ENCODE measurements at regions of chr20 and their contacts with region 1.

Region 1: DNA sequence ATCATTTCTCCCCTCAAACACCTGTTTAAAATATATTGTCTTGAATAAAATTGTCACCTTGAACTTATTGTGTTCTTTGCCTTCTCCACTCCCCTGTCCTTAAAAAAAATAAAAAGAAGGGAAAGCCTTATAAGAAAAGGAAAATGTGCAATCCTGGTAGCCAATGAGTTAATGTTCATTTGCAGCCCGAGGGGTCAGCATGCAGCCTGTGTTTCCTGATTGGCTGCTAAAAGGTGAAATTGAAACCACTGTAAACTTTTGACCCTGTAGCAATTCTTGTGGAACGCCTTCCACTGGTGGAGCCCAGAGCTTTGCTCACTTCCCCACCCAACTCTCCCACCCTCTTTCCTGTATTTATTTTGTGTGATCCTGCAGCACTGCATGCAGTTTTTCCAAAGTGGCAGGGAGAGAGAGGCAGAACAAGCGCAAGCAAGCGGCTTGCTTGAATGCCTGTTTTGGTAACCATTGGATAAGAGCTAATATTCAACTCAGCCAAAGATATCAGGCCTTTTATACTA is 74.9 kb downstream of the NCOA3 start:
- DNase-seq: peak; percentile 55 to 96
- H3K4me3 ChIP-seq: peak overlapping the region; percentile 2 to 24 (median 14)
- H3K27ac ChIP-seq: peak overlapping the region; percentile 52 to 78 (median 70)
- H3K4me1 ChIP-seq: peaks cover 47 to 85% (median 69%) of the 10 kb centered on the region in 4 donors
- H3K27me3 ChIP-seq: no peaks in the 10 kb centered on the region
- CTCF ChIP-seq: no peak
- EP300 ChIP-seq: no peak
- POLR2A ChIP-seq: no peak

Region 2: DNA sequence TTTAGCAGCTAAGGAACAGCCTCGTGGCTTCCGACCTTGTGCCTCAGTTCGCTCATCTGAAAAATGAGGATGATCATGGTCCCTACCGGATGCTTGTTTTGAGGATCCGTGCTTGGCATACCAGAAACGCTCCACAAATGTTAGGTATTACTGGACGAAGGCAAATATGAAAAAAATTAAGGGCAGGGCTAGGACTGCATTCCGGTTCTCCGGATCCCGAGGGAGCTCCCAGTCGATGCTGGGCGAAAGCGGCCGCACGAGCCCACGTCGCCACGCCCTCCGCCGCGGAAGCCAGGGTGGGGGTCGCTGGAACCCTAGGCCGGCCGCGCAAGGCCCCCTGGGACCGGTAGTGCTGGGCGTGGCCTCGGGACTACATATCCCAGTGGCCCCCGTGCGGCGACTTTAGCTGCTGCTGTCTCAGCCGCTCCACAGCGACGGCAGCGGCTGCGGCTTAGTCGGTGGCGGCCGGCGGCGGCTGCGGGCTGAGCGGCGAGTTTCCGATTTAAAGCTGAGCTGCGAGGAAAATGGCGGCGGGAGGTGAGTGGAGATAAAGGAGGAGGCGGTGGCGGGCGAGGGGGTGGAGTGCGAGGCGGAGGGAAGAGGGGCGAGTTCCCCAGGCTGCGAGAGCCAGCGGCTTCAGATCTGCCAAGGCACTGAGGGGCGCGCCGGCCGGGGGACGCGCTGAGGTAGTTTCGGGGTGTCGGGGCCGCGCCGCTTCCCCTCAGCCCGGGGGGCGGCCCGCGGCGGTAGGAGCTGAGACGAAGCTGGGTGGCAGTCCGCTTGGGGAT is 74.9 kb before region 1 on chr20 and contains the start of gene NCOA3:
- intact Hi-C with region 1: loop called (anchors 10 kb)
- DNase-seq: peak; percentile 95 to 98
- H3K4me3 ChIP-seq: peak within 1 kb of the TSS; percentile 71 to 97 (median 92)
- H3K27ac ChIP-seq: peak within 1 kb of the TSS; percentile 91 to 98 (median 96)
- H3K4me1 ChIP-seq: peaks cover 7 to 50% (median 33%) of the 10 kb centered on the region in 4 donors
- H3K27me3 ChIP-seq: no peaks in the 10 kb centered on the region
- CTCF ChIP-seq: peak in 5 of 7 experiments; percentile 52 to 79 (median 71)
- EP300 ChIP-seq: no peak
- POLR2A ChIP-seq: peak in 2 of 4 donors; percentile 83 to 89
- total RNA-seq, gene NCOA3: 8.7 to 60.8 (median 27.7) TPM